Activated CD4-positive, alpha-beta T cell treated with anti-CD3 and anti-CD28 coated beads, Interleukin-2, amount 10 ng/mL, durations not matched to agents 7 days and 5 days (primary cell): ENCODE measurements at regions of chr9 and their contacts with region 1.

Region 1: DNA sequence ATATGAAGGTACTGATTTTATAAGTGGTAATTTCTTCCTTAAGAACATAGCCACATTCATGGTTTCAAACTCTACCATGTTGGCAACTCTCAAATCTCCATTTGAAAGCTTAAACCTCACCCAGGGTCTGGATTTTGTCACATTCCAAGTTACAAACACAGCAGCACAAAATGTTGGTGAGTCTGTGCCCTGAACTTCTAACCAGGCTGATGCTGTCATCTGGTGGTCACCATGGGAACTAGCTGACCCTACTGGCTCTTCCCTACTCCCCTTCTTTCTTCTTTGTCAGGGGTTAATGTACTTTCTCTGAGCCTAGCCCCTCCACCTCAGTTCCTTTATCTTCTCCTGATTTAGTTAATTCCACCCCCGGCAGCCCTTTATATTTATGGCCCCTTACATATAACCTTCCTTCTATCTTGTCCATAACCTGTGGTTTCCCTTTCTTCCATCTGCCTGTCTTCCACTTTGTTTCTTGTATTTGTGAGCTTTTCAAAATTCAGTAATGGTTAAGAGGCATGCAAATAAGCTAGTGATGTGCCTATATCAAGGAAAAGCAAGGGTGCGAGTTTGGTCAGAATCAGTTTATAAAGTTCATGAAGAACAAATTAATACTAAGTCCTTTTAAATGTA is 35.9 kb downstream of the TGFBR1 start:
- DNase-seq: peak; percentile 54
- H3K4me3 Mint-ChIP-seq: no peak overlapping the region
- H3K27ac Mint-ChIP-seq: no peak overlapping the region
- H3K4me1 Mint-ChIP-seq: peaks cover 41% of the 10 kb centered on the region
- H3K27me3 Mint-ChIP-seq: no peaks in the 10 kb centered on the region

Region 2: DNA sequence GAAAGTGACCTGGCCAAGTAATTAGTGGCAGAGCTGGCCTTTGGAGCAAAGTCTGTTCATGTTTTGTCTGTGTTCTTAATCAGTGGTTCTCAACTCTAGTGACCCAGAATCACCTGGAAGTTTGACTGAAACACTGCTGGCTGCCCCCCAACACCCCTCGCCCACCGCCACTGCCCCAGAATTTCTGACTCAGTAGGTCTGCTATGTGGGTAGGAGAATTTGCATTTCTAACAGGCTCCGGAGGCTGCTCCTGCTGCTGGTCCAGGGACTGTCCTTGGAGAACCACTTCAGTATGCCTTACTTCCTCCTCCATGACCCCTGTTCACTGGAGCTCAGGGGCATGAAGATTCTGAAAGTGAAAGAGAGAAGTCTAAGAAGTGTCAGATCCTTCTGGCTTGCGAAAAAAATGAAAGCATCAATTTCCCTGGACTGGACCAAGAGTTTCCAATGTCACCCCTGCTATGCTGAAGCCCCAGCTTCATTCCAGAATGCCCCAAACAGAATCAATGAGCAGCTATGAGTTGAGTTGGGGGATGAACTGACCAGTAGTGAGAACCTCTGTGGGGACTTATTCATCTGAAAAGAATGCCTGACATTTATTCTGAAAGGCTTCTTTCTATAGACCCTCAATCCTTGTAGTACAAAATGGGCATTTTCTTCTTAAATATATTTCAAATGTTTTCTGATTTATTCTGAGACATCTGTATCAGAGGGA is 217.9 kb before region 1 on chr9:
- CTCF ChIA-PET with region 1: no interaction called
- POLR2A ChIA-PET with region 1: no interaction called
- DNase-seq: no peak
- H3K4me3 Mint-ChIP-seq: no peak overlapping the region
- H3K27ac Mint-ChIP-seq: no peak overlapping the region
- H3K4me1 Mint-ChIP-seq: peaks cover 4% of the 10 kb centered on the region
- H3K27me3 Mint-ChIP-seq: peaks cover 6% of the 10 kb centered on the region

Region 3: GRCh38 chr9:98958271-98958984 is 182.4 kb before region 1 on chr9:
- CTCF ChIA-PET with region 1: no interaction called
- POLR2A ChIA-PET with region 1: no interaction called
- DNase-seq: no peak
- H3K4me3 Mint-ChIP-seq: no peak overlapping the region
- H3K27ac Mint-ChIP-seq: no peak overlapping the region
- H3K4me1 Mint-ChIP-seq: no peaks in the 10 kb centered on the region
- H3K27me3 Mint-ChIP-seq: peaks cover 3% of the 10 kb centered on the region

Region 4: GRCh38 chr9:98974994-98975712 is 165.6 kb before region 1 on chr9:
- CTCF ChIA-PET with region 1: interaction called, 16 read pairs
- POLR2A ChIA-PET with region 1: no interaction called
- DNase-seq: peak; percentile 80
- H3K4me3 Mint-ChIP-seq: no peak overlapping the region
- H3K27ac Mint-ChIP-seq: no peak overlapping the region
- H3K4me1 Mint-ChIP-seq: peaks cover 10% of the 10 kb centered on the region
- H3K27me3 Mint-ChIP-seq: peaks cover 22% of the 10 kb centered on the region

Region 5: DNA sequence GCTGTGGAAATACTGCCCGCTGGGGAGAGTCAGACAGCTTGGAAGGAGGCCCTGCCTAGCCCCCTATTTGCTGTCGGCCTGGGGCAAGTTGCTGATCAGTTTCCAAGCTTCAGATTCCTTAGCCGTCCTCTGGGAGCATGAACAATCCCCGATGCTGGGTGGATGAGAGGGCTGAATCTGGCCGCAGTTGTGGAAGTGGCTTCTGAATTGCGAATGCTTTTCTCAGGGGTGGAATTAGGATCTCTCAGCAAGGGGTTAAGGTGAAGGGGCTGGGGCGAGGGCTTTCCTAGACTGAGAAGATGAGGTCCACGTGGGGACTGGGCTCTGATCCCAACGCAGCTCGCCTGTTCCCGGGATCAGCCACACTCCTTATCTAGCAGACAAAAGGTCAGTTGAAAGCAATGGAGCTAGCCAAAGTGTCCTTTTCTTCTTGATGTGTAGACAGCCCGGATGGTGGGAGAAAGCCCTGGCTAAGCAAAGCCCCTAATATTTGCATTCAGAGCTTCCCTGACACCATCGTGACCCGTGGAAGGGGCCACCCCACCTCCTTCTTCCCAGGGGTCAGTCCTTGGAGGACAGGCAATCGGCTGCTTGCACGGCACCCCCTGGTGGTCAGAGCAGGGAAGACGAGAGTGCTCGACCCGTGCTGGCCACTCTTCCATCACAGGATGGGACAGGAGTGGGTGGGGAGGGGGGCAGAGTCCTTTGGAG is 142.2 kb before region 1 on chr9:
- CTCF ChIA-PET with region 1: interaction called, 16 read pairs
- POLR2A ChIA-PET with region 1: no interaction called
- DNase-seq: peak; percentile 63
- H3K4me3 Mint-ChIP-seq: no peak overlapping the region
- H3K27ac Mint-ChIP-seq: no peak overlapping the region
- H3K4me1 Mint-ChIP-seq: peaks cover 29% of the 10 kb centered on the region
- H3K27me3 Mint-ChIP-seq: peaks cover 14% of the 10 kb centered on the region

Region 6: DNA sequence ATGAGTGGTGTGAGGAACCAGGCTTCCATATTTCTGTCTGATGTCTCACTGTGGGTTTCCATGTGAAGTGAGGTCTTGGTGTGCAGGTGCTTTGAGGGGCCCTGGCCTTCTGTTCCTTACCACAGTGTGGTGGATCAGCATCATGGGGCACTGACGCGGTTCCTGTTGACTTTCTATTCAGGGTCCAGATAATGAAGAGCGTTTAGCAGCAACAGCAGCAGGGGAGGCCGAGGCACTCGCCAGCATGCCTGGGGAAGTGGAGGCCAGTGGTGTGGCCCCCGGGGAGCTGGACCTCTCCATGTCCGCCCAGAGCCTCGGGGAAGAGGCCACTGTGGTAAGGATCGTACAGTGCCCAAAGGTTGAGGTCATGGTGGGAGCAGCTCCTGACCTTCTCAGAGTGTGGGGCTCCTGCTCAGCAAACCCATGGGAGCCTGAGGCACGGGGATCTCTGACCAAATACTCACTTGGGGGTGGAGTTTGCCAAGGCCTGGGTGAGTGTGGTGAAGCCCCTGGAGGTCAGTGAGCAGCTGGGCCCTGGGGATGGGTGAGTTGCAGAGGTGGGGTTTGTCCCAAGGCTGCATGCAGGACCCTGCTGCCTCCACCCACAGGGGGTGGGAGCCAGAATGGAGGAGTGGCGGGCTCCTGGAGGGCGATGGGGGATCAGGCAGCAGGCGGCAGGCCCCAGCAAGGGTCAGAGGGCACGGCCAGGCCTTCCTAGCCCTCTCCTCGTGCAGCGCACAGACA is 135.9 kb before region 1 on chr9:
- CTCF ChIA-PET with region 1: interaction called, 10 read pairs
- POLR2A ChIA-PET with region 1: no interaction called
- DNase-seq: no peak
- H3K4me3 Mint-ChIP-seq: no peak overlapping the region
- H3K27ac Mint-ChIP-seq: peak overlapping the region; percentile 17
- H3K4me1 Mint-ChIP-seq: peaks cover 26% of the 10 kb centered on the region
- H3K27me3 Mint-ChIP-seq: peaks cover 10% of the 10 kb centered on the region

Region 7: GRCh38 chr9:99192786-99193465 is 52.1 kb after region 1 on chr9:
- CTCF ChIA-PET with region 1: no interaction called
- POLR2A ChIA-PET with region 1: no interaction called
- DNase-seq: no peak
- H3K4me3 Mint-ChIP-seq: no peak overlapping the region
- H3K27ac Mint-ChIP-seq: no peak overlapping the region
- H3K4me1 Mint-ChIP-seq: peaks cover 27% of the 10 kb centered on the region
- H3K27me3 Mint-ChIP-seq: no peaks in the 10 kb centered on the region